AG04449 (cell line): ENCODE measurements at regions of chr1 and their contacts with region 1.

Region 1: GRCh38 chr1:160098852-160099561 is 588 bp upstream of the IGSF8 start:
- DNase-seq: peak; percentile 29
- H3K4me3 ChIP-seq: peak overlapping the region; percentile 72
- CTCF ChIP-seq: no peak

Region 2: GRCh38 chr1:160085686-160086455 is 13.1 kb before region 1 on chr1:
- CTCF ChIA-PET with region 1: interaction called, 100 read pairs
- POLR2A ChIA-PET with region 1: no interaction called
- DNase-seq: no peak
- H3K4me3 ChIP-seq: no peak overlapping the region
- CTCF ChIP-seq: peak; percentile 91

Region 3: DNA sequence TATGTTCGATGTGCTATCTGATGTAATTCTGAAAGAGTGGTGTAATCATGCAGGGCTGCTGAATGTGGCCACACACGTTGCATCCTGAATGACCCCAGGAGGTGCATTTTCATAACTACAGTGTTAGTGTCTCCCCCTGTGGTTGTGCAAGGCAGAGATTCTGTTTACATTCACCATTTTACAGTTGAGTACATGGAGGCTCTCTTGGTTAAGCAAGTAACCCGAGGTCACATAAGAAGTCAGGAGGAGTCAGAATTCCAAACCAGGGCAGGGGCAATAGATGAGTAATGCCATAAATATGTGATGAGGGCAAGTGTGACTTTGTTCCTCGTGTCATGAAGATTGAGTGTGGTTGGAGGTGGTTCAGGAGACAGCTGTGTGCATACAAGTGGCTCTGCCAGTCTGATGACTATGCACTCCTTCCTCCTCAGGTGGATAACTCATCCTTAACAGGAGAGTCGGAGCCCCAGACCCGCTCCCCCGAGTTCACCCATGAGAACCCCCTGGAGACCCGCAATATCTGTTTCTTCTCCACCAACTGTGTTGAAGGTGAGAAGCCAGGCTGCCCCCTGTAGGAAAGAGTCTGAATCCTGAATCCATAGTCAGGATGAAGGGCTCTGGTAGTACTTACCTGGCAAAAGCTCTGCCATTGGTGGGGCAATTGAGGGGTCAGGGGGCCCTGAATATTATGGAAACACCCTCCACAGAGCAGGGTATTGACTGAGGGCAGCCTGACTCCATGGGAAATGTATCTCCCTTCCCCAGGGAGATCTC is 25.9 kb after region 1 on chr1:
- CTCF ChIA-PET with region 1: interaction called, 19 read pairs
- POLR2A ChIA-PET with region 1: no interaction called
- DNase-seq: peak; percentile 45
- H3K4me3 ChIP-seq: no peak overlapping the region
- CTCF ChIP-seq: peak; percentile 20

Region 4: GRCh38 chr1:160205242-160206035 is 106.4 kb after region 1 on chr1 and contains the start of gene PEA15:
- CTCF ChIA-PET with region 1: interaction called, 49 read pairs
- POLR2A ChIA-PET with region 1: no interaction called
- DNase-seq: no peak
- H3K4me3 ChIP-seq: peak within 1 kb of the TSS; percentile 96
- CTCF ChIP-seq: no peak

Region 5: DNA sequence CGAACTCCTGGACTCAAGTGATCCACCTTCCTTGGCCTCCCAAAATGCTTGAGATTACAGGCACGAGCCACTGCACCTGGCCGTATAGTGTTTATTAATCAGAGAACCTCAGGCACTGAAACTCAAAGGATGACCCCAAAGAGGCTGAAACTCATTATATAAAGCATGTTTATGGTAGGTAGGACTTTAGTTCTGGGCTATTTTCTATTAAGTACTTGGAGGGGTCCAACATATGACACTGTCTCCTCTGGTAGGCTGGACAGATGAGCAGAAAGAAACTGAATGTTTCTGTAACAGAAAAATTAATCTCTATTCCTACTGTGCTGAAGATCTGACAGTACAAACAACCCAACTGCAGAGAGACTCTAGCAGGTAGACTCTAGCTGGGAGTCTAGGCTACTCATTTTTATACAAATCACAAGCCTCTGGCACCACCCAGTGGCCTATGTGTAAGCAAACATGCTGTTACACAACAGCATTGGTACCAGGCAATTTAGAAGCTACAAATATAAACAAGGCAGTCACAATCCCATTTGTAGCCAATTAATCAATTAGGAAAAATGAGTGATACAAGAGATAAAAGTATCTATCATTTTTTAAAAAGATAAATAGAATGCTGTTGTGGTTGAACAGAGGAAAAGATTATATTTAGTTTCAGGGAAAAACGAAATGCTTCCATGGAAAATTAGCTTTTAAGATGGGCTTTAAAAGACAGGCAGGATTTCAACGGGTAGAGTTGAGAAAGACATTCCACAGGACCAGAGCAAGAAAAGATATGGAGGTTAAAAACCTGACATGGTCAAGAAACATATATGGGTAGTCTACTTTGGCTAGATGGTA is 152.9 kb after region 1 on chr1:
- CTCF ChIA-PET with region 1: interaction called, 171 read pairs
- POLR2A ChIA-PET with region 1: no interaction called
- DNase-seq: no peak
- H3K4me3 ChIP-seq: no peak overlapping the region
- CTCF ChIP-seq: peak; percentile 54

Region 6: GRCh38 chr1:160376525-160377131 is 277.6 kb after region 1 on chr1:
- CTCF ChIA-PET with region 1: interaction called, 72 read pairs
- POLR2A ChIA-PET with region 1: no interaction called
- DNase-seq: no peak
- H3K4me3 ChIP-seq: no peak overlapping the region
- CTCF ChIP-seq: peak; percentile 84

Region 7: GRCh38 chr1:160416369-160416768 is 317.4 kb after region 1 on chr1:
- CTCF ChIA-PET with region 1: no interaction called
- POLR2A ChIA-PET with region 1: no interaction called
- DNase-seq: no peak
- H3K4me3 ChIP-seq: no peak overlapping the region
- CTCF ChIP-seq: peak; percentile 62